ENCODE measurements at regions of chr7 and their contacts with region 1.

Region 1: DNA sequence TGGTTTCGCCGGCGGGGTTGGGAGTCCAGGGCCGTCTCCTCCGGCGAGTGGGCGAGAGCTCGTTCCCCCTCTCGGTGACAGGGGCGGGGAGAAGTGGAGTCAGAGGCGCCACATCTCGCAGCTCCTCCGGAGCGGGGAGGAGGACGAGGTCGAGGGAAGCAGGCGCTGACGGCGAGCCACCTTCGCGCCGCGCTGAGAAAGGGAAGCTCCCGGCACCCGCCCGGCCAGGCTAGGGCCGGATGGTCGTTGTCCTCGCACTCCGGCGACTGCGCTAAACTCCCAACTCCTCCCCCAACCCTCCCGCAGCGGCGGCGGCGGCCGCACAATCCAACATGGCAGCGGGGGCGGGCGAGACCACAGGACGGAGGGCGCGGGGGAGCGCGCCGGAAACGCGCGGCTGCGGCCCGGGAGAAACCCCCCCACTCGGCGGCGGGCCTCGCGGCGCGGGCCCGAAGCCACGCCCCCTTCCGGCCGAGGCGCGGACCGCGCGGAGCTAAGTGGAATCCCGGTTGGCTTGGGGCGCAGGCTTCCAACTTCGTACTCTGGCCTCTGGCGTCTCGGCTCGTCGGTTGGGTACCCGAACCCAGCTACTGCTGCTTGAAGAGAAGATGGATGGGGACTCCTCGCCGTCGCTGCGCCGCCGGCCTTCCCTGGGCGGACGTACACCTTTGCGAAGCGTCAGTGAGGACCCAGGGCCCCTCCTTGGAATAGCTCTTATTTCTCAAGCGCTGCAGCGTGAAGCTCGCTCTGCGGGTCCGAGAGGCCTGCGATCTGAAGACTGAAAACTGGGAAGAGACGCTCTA is at the start of gene WASL:
- DNase-seq: no peak
- H3K4me3 ChIP-seq: peak within 1 kb of the TSS; percentile 90
- CTCF ChIP-seq: no peak

Region 2: DNA sequence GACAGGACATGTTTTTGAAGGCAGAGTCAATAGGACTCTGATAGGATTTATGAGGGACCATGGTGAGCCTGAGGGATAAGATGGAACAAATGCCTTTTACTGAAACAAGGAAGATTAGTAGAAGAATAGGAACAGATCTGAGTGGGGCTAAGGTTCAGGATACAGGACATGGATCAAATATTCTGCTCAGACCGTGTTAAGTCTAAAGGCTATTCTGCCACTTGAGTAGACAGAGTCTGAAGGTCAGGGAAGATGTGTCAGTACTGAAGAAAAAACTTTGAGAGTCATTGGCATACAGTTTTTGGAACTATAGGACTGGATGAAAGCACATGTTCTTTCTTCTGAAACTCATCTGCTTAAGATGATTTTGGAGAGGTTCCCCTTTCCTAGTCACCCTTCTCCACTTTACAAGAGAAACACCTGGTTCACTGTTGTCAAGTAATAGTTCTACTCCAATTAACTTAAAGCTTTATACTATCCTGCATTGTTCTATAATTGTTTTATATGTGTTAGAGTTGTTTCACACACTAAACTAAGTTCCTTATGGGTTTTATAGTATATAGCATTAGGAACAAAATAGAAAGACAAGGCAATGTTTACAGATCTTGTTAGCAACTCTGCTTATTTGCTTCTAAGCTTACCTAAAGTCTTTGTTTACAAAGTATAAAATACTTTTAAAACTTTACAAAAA is 43.6 kb before region 1 on chr7:
- CTCF ChIA-PET with region 1: interaction called, 12 read pairs
- POLR2A ChIA-PET with region 1: no interaction called
- DNase-seq: no peak
- H3K4me3 ChIP-seq: no peak overlapping the region
- CTCF ChIP-seq: no peak

Region 3: GRCh38 chr7:123712619-123713018 is 36.3 kb before region 1 on chr7:
- CTCF ChIA-PET with region 1: interaction called, 3 read pairs
- POLR2A ChIA-PET with region 1: interaction called, 10 read pairs
- DNase-seq: peak; percentile 40
- H3K4me3 ChIP-seq: no peak overlapping the region
- CTCF ChIP-seq: no peak

Region 4: DNA sequence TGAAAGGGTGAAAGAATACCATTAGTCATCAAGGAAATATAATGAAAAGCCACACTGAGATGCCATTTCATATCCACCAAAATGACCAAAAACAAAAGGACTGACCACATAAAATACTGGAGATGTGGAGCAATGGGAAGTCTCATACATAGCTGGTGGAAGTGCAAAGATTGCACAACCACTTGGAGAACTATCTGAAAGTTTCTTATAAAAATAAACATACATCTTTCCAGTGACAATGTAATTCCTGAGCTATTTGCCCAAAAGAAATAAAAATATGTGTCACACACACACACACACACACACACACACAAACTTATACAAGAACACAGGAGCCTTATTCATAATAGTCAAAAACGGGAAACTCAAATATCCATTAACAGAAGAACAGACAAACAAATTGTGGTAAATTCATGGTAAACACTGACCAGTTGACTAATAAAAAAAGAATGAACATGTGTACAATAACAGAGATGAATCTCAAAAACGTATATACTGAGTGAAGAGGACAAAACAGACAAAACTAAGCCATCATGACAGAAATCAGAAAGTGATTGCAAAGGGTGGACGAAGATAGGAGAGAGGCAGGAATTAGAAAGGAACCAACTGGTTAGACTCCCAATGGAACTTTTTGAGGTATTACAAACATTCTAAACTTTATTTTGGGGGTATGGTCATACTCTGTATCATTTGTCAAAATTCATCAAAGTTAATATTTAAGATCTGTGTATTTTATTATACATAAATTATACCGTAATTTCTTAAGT is 21.7 kb before region 1 on chr7:
- CTCF ChIA-PET with region 1: interaction called, 4 read pairs
- POLR2A ChIA-PET with region 1: interaction called, 16 read pairs
- DNase-seq: peak; percentile 67
- H3K4me3 ChIP-seq: no peak overlapping the region
- CTCF ChIP-seq: no peak

Measured in AG04449 (cell line).